Endothelial cell of umbilical vein (primary cell): ENCODE measurements at regions of chr18 and their contacts with region 1.

Region 1: GRCh38 chr18:62425465-62426195 is 97.2 kb upstream of the ZCCHC2 start:
- DNase-seq: peak; percentile 98
- H3K4me3 ChIP-seq: peak overlapping the region in 2 of 3 experiments; percentile 28 to 64
- H3K27ac ChIP-seq: peak overlapping the region; percentile 86
- H3K4me1 ChIP-seq: peaks cover 16% of the 10 kb centered on the region
- H3K27me3 ChIP-seq: no peaks in the 10 kb centered on the region
- CTCF ChIP-seq: peak; percentile 78 to 86
- POLR2A ChIP-seq: no peak

Region 2: DNA sequence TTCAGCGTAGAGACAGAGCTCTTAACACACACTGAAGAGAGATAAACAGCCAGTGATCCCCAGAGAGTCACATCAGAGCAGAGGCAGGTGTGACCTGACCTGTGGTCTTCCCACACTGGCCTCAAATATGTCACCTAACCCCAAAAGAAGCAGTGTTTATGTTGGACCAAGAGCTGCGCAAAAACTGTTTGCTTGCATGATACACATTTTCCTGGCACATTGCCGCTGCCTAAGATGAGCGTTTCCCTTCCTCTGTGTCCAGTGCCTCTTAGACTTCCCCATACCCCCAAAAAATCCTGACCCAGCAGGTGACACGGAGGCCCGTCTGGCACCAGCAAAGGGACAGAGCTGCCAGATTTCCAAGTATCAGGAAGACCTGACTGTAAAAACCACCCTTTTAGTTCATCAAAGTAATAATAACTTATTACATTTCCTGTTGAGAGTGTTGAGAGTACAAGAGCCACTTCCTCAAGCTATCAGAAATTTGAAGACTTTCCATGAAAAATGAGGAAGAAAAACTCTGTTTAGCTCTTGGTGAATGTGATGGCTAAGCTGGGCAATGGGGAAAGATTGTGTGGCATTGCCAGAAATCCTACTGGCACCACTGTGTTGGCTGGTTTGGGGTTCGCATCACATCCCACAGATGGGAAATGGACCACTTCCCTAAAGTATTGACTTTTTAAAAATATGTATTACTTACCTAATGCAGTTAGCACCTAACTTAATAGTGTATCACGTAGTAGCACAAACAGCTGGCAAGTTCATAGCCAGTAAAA is 93.9 kb before region 1 on chr18:
- CTCF ChIA-PET with region 1: interaction called, 12 read pairs
- POLR2A ChIA-PET with region 1: no interaction called
- dilution Hi-C with region 1: no loop called
- intact Hi-C with region 1: no loop called
- DNase-seq: peak; percentile 96
- H3K4me3 ChIP-seq: no peak overlapping the region
- H3K27ac ChIP-seq: peak overlapping the region; percentile 29
- H3K4me1 ChIP-seq: peaks cover 81% of the 10 kb centered on the region
- H3K27me3 ChIP-seq: no peaks in the 10 kb centered on the region
- CTCF ChIP-seq: no peak
- POLR2A ChIP-seq: no peak

Region 3: DNA sequence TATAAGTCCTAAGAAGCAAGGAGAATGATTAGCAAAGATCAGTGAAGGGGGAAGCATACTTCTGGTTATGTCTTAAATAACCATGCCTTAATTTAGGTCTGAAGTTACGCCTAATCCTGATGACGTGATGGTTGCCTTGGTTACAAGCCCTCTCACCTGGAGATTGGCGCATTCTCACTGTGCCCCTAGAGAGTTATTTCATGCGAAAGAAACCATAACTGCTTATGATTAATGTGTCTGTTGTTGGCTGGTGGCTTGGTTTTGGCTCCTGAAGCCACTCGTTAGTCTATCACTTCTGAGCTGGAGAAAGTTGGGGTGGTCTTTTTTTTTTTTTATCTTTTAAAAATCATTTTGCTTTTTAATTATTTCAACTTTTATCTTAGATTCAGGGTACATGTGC is 53.5 kb before region 1 on chr18:
- CTCF ChIA-PET with region 1: no interaction called
- POLR2A ChIA-PET with region 1: no interaction called
- dilution Hi-C with region 1: no loop called
- intact Hi-C with region 1: no loop called
- DNase-seq: no peak
- H3K4me3 ChIP-seq: no peak overlapping the region
- H3K27ac ChIP-seq: no peak overlapping the region
- H3K4me1 ChIP-seq: no peaks in the 10 kb centered on the region
- H3K27me3 ChIP-seq: no peaks in the 10 kb centered on the region
- CTCF ChIP-seq: no peak
- POLR2A ChIP-seq: no peak

Region 4: DNA sequence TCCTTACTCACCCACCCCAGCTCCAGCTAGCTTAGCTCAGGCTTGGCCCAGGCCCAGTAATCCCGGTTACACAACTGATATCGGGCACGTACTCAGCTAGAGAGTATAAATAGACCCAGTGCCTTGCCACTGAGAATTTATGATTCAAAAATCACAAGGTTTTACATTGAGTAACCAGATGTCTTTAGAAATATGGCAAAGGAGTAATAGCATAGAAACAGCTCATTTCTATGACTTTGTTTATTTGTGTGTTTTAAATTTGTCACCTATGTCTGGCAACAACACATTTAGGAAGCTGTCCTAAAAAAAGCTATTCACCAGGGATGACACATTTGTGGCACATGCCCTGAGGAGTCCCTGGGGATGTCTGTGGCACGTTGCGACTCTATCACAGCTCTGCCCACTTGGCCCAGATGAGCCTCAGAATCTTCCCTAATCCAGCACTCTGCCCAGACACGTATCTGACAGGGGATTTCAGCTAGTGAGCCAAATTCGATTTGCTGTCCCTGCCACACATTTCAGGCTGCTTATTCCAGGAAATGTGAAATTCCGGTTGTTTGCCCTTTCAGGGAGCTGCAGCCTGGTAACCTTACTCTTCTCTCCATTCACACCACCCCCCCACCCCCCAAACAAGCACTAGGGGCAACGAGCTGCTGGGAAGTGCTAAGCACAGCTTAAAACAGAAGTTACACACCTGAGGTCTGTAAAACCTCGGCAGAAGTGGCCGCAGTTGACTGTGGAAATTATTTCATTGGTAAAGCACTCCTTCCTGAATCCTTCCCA is 11.8 kb after region 1 on chr18:
- CTCF ChIA-PET with region 1: interaction called, 57 read pairs
- POLR2A ChIA-PET with region 1: no interaction called
- dilution Hi-C with region 1: no loop called
- intact Hi-C with region 1: no loop called
- DNase-seq: peak; percentile 57
- H3K4me3 ChIP-seq: no peak overlapping the region
- H3K27ac ChIP-seq: peak overlapping the region; percentile 65
- H3K4me1 ChIP-seq: peaks cover 22% of the 10 kb centered on the region
- H3K27me3 ChIP-seq: no peaks in the 10 kb centered on the region
- CTCF ChIP-seq: no peak
- POLR2A ChIP-seq: no peak

Region 5: DNA sequence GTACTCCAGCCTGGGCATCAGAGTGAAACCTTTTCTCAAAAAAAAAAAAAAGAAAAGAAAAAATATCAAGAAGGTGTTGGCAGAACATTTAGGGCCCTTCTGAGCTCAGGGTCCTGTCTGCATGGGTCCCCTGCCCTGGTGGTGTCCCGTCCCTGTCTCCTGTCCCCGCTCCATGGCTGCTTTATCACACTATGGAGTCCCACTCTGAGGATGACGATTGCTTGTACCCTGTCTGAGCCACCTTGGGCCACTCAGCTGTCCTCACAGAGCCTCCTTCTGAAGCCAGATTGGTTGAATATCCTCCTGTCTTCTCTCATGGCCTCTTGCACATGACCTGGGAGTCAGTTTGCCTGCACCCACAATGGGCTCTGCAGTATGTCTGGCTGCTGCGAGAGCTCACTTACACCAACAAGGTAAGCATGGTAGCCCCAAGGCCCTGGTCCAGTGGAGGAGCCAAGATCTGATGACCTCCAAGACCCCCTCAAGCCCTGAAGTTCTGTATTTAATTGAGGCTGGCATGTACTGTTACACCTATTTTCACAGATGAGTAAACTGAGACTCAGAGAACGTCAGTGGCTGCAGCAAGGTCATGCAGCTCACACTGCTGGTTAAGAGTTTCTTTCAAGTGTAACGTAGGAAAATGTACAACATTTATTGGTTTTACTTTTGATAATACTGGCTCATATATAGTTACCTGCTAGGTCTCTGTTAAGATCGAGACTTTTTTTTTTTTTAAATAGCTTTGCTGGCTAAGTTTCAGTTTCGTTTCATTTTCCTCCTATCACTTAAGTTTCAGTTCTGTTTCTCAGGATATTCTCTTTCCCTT is 80.3 kb after region 1 on chr18:
- CTCF ChIA-PET with region 1: interaction called, 10 read pairs
- POLR2A ChIA-PET with region 1: no interaction called
- dilution Hi-C with region 1: no loop called
- intact Hi-C with region 1: no loop called
- DNase-seq: peak; percentile 66
- H3K4me3 ChIP-seq: peak overlapping the region; percentile 14 to 58 (median 20)
- H3K27ac ChIP-seq: no peak overlapping the region
- H3K4me1 ChIP-seq: peaks cover 4% of the 10 kb centered on the region
- H3K27me3 ChIP-seq: no peaks in the 10 kb centered on the region
- CTCF ChIP-seq: no peak
- POLR2A ChIP-seq: no peak

Region 6: DNA sequence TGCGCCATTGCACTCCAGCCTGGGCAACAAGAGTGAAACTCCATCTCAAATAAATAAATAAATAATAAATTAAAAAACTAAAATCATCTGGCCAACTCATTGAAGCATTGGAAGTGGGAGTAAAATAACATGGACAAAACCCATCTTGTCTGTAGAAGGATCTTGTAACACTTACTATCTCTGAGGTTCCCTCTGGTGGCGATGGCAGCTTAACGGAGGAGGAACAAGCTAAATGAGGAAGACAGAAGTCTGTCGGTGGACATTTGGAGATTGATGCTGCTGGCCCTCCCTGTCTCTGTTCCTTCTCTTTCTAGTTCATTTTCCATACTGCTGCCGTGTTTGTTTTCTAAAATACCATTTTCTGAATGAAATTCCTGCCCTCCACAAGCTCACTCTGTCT is 140.6 kb after region 1 on chr18:
- CTCF ChIA-PET with region 1: interaction called, 30 read pairs
- POLR2A ChIA-PET with region 1: no interaction called
- dilution Hi-C with region 1: no loop called
- intact Hi-C with region 1: no loop called
- DNase-seq: peak; percentile 40
- H3K4me3 ChIP-seq: no peak overlapping the region
- H3K27ac ChIP-seq: no peak overlapping the region
- H3K4me1 ChIP-seq: no peaks in the 10 kb centered on the region
- H3K27me3 ChIP-seq: no peaks in the 10 kb centered on the region
- CTCF ChIP-seq: peak in 1 of 2 donors; percentile 11
- POLR2A ChIP-seq: no peak

Region 7: GRCh38 chr18:62714671-62715435 is 289.2 kb after region 1 on chr18:
- CTCF ChIA-PET with region 1: interaction called, 4 read pairs
- POLR2A ChIA-PET with region 1: no interaction called
- dilution Hi-C with region 1: no loop called
- intact Hi-C with region 1: loop called (anchors 1 kb)
- DNase-seq: peak; percentile 100
- H3K4me3 ChIP-seq: peak overlapping the region; percentile 21 to 76 (median 45)
- H3K27ac ChIP-seq: peak overlapping the region; percentile 88
- H3K4me1 ChIP-seq: peaks cover 20% of the 10 kb centered on the region
- H3K27me3 ChIP-seq: peaks cover 0 to 2% of the 10 kb centered on the region in 2 experiments
- CTCF ChIP-seq: peak; percentile 73 to 79
- POLR2A ChIP-seq: no peak